Heart right ventricle (tissue), 16 donors: ENCODE measurements at regions of chr6 and their contacts with region 1.

Region 1: GRCh38 chr6:44074439-44075136 is 52.7 kb downstream of the MRPL14 start:
- DNase-seq: peak; percentile 70 to 73
- ATAC-seq: peak; percentile 56 to 84 (median 73)
- H3K4me3 ChIP-seq: peak overlapping the region in 7 of 10 donors; percentile 22 to 62 (median 57)
- H3K27ac ChIP-seq: peak overlapping the region; percentile 70 to 93 (median 84)
- H3K4me1 ChIP-seq: peaks cover 30 to 60% (median 50%) of the 10 kb centered on the region in 9 donors
- H3K27me3 ChIP-seq: peaks cover 0 to 20% (median 0%) of the 10 kb centered on the region in 7 donors
- CTCF ChIP-seq: peak; percentile 87 to 95 (median 89)

Region 2: DNA sequence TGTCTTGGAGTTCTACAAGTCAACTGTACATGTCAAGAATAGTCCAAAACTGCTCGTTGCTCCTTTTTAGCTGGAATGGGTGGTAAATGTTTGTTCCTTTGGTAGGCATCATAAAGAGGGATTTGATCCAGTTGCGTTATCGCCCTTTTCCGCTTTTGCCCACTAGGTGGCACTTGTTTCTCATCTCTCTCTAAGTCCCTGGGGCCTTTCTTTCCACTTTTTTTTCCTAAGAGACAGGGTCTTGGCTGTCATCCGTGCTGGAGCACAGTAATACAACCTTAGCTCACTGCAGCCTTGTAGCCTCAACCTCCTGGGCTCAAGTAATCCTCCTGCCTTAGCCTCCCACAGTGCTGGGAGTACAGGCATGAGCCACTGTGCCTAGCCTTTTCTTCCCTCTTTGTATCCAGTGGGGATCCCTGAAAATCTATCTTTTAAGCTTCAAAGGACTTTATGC is 466.3 kb before region 1 on chr6:
- intact Hi-C with region 1: loop called in 7 of 10 experiments (anchors 2 to 10 kb)
- DNase-seq: peak in 1 of 2 donors; percentile 65
- ATAC-seq: peak in 7 of 8 donors; percentile 38 to 73 (median 61)
- H3K4me3 ChIP-seq: no peak overlapping the region
- H3K27ac ChIP-seq: no peak overlapping the region
- H3K4me1 ChIP-seq: peaks cover 0 to 13% (median 0%) of the 10 kb centered on the region in 9 donors
- H3K27me3 ChIP-seq: no peaks in the 10 kb centered on the region
- CTCF ChIP-seq: peak; percentile 61 to 87 (median 78)

Region 3: GRCh38 chr6:43723737-43724295 is 350.8 kb before region 1 on chr6:
- intact Hi-C with region 1: loop called in 8 of 10 experiments (anchors 1 to 5 kb)
- DNase-seq: peak; percentile 60 to 65
- ATAC-seq: peak; percentile 71 to 87 (median 78)
- H3K4me3 ChIP-seq: no peak overlapping the region
- H3K27ac ChIP-seq: peak overlapping the region in 1 of 10 donors; percentile 26
- H3K4me1 ChIP-seq: peaks cover 0 to 28% (median 9%) of the 10 kb centered on the region in 9 donors
- H3K27me3 ChIP-seq: no peaks in the 10 kb centered on the region
- CTCF ChIP-seq: peak; percentile 41 to 77 (median 68)

Region 4: DNA sequence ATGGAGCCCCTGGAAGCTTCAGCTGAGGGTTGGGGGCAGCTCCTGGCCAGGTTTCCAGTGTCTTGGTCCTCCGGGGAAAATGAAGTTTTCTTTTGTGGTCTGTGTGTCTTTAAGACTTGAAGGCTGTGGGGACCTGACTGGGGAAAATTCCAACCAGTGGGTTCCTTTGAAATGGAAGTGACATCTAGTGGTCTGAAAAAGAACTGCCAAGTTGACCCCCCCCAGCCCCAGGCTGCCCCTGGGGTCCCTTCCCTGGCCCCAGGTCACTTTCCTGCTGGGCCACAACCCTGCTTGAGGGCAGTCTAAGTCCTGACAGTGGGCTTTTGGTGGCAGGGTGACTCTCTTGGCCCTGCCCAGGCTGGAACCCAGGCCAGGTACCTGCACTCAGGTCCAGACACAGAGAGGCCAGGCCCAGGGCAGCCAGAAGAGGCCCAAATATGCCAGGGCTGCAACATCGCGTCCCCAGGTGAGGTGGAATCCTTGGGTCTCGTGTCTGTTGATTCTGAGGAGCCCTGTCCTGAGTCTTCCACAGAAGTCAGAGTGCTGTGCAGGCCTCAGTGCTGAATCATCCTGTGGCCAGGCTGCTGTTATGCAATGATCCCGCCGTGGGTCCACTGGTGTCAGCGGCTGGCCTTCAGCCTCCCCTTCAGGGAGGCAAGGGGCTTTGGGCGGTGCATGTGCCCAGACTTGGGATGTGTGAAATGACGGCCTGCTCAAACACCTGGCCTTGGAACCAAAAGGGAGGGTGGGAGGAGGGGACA is 236.1 kb before region 1 on chr6:
- intact Hi-C with region 1: loop called in 2 of 10 experiments (anchors 10 kb)
- DNase-seq: peak; percentile 18 to 40
- ATAC-seq: peak; percentile 34 to 86 (median 72)
- H3K4me3 ChIP-seq: no peak overlapping the region
- H3K27ac ChIP-seq: peak overlapping the region in 6 of 10 donors; percentile 12 to 67 (median 46)
- H3K4me1 ChIP-seq: peaks cover 0 to 16% (median 10%) of the 10 kb centered on the region in 9 donors
- H3K27me3 ChIP-seq: no peaks in the 10 kb centered on the region
- CTCF ChIP-seq: peak in 8 of 9 donors; percentile 40 to 64 (median 56)

Region 5: GRCh38 chr6:43951063-43951755 is 123.4 kb before region 1 on chr6:
- intact Hi-C with region 1: loop called in 6 of 10 experiments (anchors 1 to 10 kb)
- DNase-seq: peak; percentile 45 to 68
- ATAC-seq: peak; percentile 52 to 76 (median 62)
- H3K4me3 ChIP-seq: no peak overlapping the region
- H3K27ac ChIP-seq: peak overlapping the region in 6 of 10 donors; percentile 11 to 92 (median 56)
- H3K4me1 ChIP-seq: peaks cover 0 to 48% (median 9%) of the 10 kb centered on the region in 9 donors
- H3K27me3 ChIP-seq: peaks cover 0 to 8% (median 0%) of the 10 kb centered on the region in 7 donors
- CTCF ChIP-seq: peak; percentile 22 to 65 (median 60)

Region 6: DNA sequence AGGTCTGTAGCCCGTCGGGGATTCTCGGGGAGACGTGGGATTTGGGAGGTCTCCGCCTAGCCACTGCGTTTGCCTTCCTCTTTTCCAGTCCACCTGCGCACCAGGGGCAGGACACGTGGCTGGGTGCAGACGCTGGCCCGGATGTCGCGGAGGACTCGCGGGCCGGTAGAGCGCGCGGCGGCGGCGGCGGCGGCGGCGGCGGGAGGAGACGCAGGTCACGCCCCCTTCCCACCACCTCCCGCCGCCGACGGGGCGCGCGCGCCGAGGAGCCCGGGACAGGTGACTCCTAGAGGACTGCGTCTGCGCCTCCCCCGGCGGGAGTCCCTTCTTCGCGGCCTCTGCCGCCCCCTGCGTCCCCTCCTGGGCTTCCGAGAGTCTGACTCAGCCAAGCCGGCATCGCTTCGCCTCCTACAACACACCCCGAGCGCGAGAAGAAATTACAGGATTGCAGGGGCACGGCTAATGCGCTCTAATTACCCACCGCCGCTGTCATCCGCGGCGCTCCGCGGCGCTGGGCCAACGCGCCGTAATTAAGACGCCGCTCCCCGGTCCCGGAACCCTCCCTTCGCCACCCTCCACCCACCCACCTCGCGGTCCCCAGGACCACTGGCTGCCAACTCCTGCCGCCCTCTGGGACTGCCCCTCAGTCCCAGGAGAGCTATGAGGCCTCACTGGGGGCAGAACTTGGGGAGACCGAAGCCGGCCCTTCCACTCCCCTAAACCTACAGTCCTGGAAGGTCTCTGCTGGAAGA is 71.8 kb before region 1 on chr6:
- intact Hi-C with region 1: loop called in 3 of 10 experiments (anchors 5 to 10 kb)
- DNase-seq: peak; percentile 44 to 64
- ATAC-seq: peak; percentile 15 to 59 (median 36)
- H3K4me3 ChIP-seq: peak overlapping the region; percentile 6 to 45 (median 40)
- H3K27ac ChIP-seq: peak overlapping the region in 9 of 10 donors; percentile 53 to 95 (median 90)
- H3K4me1 ChIP-seq: peaks cover 8 to 64% (median 25%) of the 10 kb centered on the region in 9 donors
- H3K27me3 ChIP-seq: peaks cover 0 to 75% (median 27%) of the 10 kb centered on the region in 7 donors
- CTCF ChIP-seq: peak in 4 of 9 donors; percentile 21 to 43 (median 34)